Calu3 (cell line): ENCODE measurements at regions of chr3 and their contacts with region 1.

Region 1: DNA sequence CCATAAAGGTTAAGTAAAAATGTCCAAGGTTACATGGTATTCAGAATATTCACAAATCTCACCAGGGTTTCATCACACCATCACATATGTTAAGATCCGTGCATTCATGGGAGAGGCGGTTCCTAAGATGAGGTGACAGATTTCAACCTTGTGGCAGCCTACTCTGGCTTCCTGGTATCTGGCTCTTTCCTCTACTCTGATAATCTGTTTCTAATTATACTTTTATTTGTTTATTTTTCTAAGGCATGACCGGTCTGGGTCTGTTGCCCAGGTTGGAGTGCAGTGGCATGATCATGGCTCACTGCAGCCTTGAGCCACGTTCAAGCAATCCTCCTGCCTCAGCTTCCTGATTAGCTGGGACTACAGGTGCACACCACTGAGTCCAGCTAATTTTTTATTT is 34.4 kb downstream of the RAF1 start:
- DNase-seq: no peak
- H3K4me3 Mint-ChIP-seq: no peak overlapping the region
- H3K27ac Mint-ChIP-seq: no peak overlapping the region
- H3K4me1 Mint-ChIP-seq: peaks cover 15% of the 10 kb centered on the region
- H3K27me3 Mint-ChIP-seq: no peaks in the 10 kb centered on the region
- CTCF ChIP-seq: no peak

Region 2: DNA sequence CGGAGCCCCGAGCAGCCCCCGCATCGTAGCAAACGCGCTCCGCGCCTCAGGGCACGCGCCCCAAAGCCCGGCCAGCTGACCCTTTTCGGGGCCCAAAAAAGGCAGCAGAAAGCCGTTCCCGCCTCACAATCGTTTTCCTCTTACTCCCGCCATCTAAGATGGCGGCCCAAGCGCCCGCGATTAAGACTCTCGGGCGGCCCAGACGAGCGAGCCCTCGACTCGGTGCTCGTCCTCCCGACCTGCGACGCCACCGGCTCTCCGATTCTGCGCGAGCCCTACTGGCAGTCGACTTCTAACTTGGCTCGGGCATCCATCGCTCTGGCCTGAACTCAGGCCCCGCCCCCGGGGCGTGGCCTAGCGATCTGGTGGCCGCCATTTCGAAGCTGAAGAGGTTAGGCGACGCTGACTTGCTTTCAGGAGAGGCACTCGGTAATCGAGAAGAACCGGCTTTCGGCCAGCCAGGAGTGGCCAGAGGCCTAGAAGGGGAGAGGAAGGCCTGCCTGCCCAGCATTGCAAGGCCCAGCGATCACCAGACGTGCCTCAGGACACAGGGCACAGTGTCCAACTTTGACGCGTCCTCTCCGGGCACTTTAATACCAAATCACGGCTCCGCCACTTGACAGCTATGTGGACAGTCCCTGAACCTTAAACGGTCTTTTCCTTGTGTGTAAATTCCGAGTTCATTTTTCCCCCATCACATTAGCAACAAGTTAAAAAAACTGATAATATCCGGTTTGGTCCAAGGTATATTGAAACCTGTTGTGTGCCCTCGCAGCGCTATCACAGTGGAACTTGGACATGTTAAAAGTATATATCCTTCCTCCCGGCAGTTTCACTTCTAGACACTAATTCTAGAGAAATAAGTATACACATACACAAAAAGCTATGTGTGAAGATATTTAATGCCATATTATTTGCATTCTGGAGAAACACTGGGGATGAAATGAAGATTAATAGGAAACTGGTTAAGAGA is 34.7 kb after region 1 on chr3 and contains the start of gene RAF1:
- CTCF ChIA-PET with region 1: interaction called, 6 read pairs
- intact Hi-C with region 1: loop called (anchors 5 kb)
- DNase-seq: peak; percentile 98
- H3K4me3 Mint-ChIP-seq: peak within 1 kb of the TSS; percentile 76
- H3K27ac Mint-ChIP-seq: peak within 1 kb of the TSS; percentile 52
- H3K4me1 Mint-ChIP-seq: peaks cover 20% of the 10 kb centered on the region
- H3K27me3 Mint-ChIP-seq: no peaks in the 10 kb centered on the region
- CTCF ChIP-seq: no peak
- total RNA-seq, gene RAF1: 63.4 and 69.3 TPM in 2 replicates

Region 3: GRCh38 chr3:12830785-12831156 is 201.2 kb after region 1 on chr3:
- CTCF ChIA-PET with region 1: no interaction called
- intact Hi-C with region 1: no loop called
- DNase-seq: no peak
- H3K4me3 Mint-ChIP-seq: no peak overlapping the region
- H3K27ac Mint-ChIP-seq: no peak overlapping the region
- H3K4me1 Mint-ChIP-seq: no peaks in the 10 kb centered on the region
- H3K27me3 Mint-ChIP-seq: no peaks in the 10 kb centered on the region
- CTCF ChIP-seq: peak; percentile 26